ENCODE measurements at regions of chr18 and their contacts with region 1.

Region 1: DNA sequence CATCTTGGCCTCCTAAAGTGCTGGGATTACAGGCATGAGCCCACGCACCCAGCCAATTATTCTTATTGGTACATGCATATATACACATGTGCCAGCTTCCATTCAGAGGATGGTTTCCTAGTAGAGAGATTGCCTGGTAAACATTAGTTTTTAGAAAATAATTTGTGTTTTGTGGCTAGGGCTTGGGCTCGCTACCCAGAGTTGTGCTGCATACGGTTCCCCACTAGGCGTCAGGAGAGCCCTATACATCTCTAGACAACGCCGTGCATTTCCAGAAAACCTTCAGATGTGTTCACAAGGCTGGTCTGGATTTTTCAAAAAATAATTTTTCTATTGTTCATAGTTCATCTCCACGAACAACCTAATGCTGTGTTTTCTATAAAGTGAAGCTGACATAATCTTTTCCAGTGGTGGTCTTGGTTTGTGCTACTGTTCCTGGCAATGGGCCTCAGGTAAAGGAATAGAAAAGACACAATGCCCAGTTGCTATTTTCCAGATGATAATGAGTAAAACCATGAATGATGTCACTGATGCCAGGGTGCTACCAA is 14.7 kb upstream of the AFG3L2 start:
- DNase-seq: peak in 1 of 2 experiments; percentile 64
- H3K4me3 ChIP-seq: no peak overlapping the region
- H3K27ac ChIP-seq: no peak overlapping the region
- H3K4me1 ChIP-seq: peaks cover 5% of the 10 kb centered on the region
- H3K27me3 ChIP-seq: no peaks in the 10 kb centered on the region
- CTCF ChIP-seq: peak; percentile 90

Region 2: GRCh38 chr18:12092398-12093229 is 299.1 kb before region 1 on chr18:
- CTCF ChIA-PET with region 1: no interaction called
- POLR2A ChIA-PET with region 1: no interaction called
- intact Hi-C with region 1: loop called (anchors 2 kb)
- DNase-seq: peak; percentile 41 to 73
- H3K4me3 ChIP-seq: no peak overlapping the region
- H3K27ac ChIP-seq: no peak overlapping the region
- H3K4me1 ChIP-seq: no peaks in the 10 kb centered on the region
- H3K27me3 ChIP-seq: no peaks in the 10 kb centered on the region
- CTCF ChIP-seq: peak; percentile 79

Region 3: GRCh38 chr18:12500986-12501385 is 109.3 kb after region 1 on chr18:
- CTCF ChIA-PET with region 1: interaction called, 12 read pairs
- POLR2A ChIA-PET with region 1: no interaction called
- intact Hi-C with region 1: no loop called
- DNase-seq: no peak
- H3K4me3 ChIP-seq: no peak overlapping the region
- H3K27ac ChIP-seq: no peak overlapping the region
- H3K4me1 ChIP-seq: peaks cover 9% of the 10 kb centered on the region
- H3K27me3 ChIP-seq: no peaks in the 10 kb centered on the region
- CTCF ChIP-seq: no peak

Region 4: DNA sequence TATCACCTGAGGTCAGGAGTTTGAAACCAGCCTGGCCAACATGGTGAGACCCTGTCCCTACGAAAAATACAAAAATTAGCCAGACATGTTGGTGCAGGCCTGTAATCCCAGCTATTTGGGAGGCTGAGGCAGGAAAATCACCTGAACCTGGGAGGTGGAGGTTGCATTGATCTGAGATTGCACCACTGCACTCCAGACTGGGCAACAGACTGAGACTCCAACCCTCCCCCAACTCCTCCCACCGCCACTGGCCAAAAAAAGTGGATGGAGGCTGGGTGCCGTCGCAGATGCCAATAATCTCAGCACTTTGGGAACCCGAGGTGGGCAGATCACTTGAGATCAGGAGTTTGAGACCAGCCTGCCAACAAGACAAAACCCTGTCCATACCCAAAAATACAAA is 276.3 kb after region 1 on chr18:
- CTCF ChIA-PET with region 1: interaction called, 14 read pairs
- POLR2A ChIA-PET with region 1: no interaction called
- intact Hi-C with region 1: no loop called
- DNase-seq: no peak
- H3K4me3 ChIP-seq: no peak overlapping the region
- H3K27ac ChIP-seq: no peak overlapping the region
- H3K4me1 ChIP-seq: no peaks in the 10 kb centered on the region; the same call in 1 of the 2 replicates
- H3K27me3 ChIP-seq: no peaks in the 10 kb centered on the region
- CTCF ChIP-seq: no peak

Region 5: DNA sequence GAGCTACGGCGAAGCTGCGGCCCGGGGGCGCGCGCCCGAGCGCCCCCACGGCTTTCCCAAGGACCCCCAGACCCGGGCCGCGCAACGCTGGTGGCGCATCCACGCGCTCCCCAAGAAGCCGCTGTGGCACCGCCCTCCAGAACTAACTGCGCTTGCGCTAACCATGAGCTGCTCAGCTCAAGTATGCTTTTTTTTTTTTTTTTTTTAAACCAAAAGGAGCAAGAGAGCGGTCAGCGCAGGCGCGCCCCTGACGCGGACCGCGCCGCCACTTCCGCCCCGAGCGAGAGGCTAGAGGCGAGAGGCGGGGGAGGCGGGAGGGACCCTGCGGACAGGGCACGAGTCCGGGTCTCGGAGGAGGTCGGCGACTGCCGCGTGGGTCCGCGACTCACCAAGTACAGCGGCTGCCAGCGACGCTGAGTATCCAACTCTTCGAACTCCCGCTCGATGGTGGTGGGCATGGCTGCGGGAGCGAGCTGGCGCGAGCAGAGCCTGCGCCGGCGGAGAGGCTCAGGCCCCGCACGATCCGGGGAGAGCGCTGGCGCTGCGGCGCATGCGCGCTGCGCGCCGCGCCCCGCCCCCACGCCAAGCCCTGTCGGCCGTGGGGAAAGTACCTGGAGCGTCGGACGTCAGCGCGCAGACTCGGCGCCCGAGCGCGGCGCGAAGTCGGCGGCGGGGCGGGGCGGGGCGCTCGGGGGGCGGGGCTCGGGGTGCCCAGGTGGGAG is 492.2 kb after region 1 on chr18 and contains the start of gene PTPN2:
- CTCF ChIA-PET with region 1: interaction called, 10 read pairs
- POLR2A ChIA-PET with region 1: no interaction called
- intact Hi-C with region 1: no loop called
- DNase-seq: peak; percentile 86 to 95
- H3K4me3 ChIP-seq: peak within 1 kb of the TSS; percentile 99
- H3K27ac ChIP-seq: peak within 1 kb of the TSS; percentile 95
- H3K4me1 ChIP-seq: peaks cover 33% of the 10 kb centered on the region
- H3K27me3 ChIP-seq: no peaks in the 10 kb centered on the region
- CTCF ChIP-seq: no peak
- total RNA-seq, gene PTPN2: 77.2 and 78.1 TPM in 2 replicates

Region 6: DNA sequence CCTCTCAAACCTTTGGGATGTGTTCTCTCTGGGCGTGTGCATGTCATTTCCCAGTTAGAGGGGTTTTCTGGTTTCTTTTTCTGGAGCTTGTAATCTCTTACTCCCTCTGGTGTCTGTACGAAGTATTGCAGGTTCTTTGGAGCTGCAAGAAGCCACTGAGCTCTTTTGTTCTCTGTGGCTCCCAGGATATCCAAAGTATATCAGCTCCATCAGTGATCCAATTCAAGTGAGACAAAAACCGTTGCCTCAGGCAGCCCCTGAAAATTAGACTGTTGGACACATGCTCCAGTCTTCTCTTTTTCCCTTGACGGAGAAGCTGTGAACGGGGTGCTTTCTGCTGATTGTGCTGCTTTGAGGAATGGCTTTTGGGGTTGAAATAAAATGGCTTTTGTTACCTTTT is 767.9 kb after region 1 on chr18:
- CTCF ChIA-PET with region 1: interaction called, 4 read pairs
- POLR2A ChIA-PET with region 1: no interaction called
- intact Hi-C with region 1: loop called (anchors 2 kb)
- DNase-seq: peak in 1 of 2 experiments; percentile 39
- H3K4me3 ChIP-seq: no peak overlapping the region
- H3K27ac ChIP-seq: no peak overlapping the region
- H3K4me1 ChIP-seq: no peaks in the 10 kb centered on the region
- H3K27me3 ChIP-seq: peaks cover 17% of the 10 kb centered on the region; the same call in 1 of the 2 replicates
- CTCF ChIP-seq: peak; percentile 92

Measured in PC-9 (cell line).